H1 (cell line): ENCODE measurements at regions of chr11 and their contacts with region 1.

Region 1: GRCh38 chr11:15101072-15101709 is 13.5 kb upstream of the INSC start:
- DNase-seq: peak; percentile 21 to 83
- H3K4me3 ChIP-seq: no peak overlapping the region
- H3K27ac ChIP-seq: no peak overlapping the region
- H3K4me1 ChIP-seq: no peaks in the 10 kb centered on the region; a peak in 1 of 7 replicates
- H3K27me3 ChIP-seq: no peaks in the 10 kb centered on the region; a peak in 1 of 7 replicates
- CTCF ChIP-seq: peak; percentile 87 to 95 (median 94)
- EP300 ChIP-seq: no peak
- POLR2A ChIP-seq: no peak
- RAD21 ChIP-seq: peak; percentile 92 to 93

Region 2: DNA sequence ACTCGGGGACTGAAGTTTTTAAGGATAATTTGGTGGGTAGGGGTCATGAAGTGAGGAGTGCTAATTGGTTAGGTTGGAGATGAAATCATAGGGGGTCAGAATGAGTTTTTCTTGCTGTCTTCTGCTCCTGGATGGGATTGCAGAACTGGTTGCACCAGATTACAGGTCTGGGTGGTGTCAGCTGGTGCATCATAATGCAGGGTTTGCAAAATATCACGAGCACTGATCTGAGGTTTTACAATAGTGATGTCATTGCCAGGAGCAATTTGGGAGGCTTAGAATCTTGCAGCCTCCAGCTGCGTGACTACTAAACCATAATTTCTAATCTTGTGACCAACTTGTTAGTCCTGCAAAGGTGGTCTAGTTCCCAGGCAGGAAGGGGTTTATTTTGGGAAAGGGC is 74.2 kb before region 1 on chr11:
- CTCF ChIA-PET with region 1: no interaction called
- POLR2A ChIA-PET with region 1: no interaction called
- DNase-seq: no peak
- H3K4me3 ChIP-seq: no peak overlapping the region
- H3K27ac ChIP-seq: no peak overlapping the region
- H3K4me1 ChIP-seq: peaks cover 0 to 3% (median 0%) of the 10 kb centered on the region in 4 experiments; a peak in 2 of 7 replicates
- H3K27me3 ChIP-seq: no peaks in the 10 kb centered on the region
- CTCF ChIP-seq: no peak
- EP300 ChIP-seq: no peak
- POLR2A ChIP-seq: no peak
- RAD21 ChIP-seq: no peak

Region 3: DNA sequence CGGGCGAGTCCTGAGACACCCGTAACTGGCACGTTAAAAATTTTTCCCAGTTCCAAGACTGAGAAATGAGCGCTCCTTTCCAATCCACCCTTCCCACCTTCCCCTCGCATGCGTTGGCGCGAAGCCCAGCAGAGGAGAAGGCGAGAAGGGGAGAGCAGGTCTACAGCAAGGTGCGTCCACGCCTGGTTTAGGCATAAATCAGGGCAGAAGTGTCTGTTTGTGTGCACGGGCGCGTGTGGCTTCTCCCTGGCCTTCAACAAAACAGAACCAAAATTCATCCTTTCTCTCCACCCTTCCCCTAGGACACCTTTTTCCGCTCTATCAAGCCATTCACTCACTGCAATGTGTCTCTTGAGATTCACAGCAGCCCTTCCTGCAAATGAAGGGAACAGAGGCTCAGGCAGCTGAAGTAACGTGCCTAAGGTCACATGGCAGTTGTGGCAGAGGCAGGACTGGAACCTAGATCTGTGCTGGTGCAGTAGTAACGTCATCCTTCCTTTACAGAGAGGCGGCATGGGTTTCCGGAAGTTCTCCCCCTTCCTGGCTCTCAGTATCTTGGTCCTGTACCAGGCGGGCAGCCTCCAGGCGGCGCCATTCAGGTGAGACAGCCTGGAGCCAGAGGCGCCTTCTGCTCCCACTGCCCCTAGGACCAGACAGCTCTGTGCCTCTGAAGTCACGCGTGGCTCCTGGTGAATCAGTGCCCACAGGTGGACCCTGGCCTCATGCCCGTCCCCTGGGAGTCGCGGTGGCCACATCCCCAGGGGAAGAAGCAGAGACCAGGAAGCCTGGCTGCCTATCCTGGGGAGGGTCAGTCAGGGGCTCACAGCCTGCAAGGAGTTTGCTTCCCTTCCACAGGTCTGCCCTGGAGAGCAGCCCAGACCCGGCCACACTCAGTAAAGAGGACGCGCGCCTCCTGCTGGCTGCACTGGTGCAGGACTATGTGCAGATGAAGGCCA is 26.7 kb before region 1 on chr11:
- CTCF ChIA-PET with region 1: interaction called, 37 read pairs
- POLR2A ChIA-PET with region 1: interaction called, 3 read pairs
- DNase-seq: peak; percentile 73 to 98
- H3K4me3 ChIP-seq: peak overlapping the region; percentile 40 to 68 (median 56)
- H3K27ac ChIP-seq: no peak overlapping the region; the same call in 1 of the 2 replicates
- H3K4me1 ChIP-seq: peaks cover 0 to 4% (median under 1%) of the 10 kb centered on the region in 4 experiments; a peak in 2 of 7 replicates
- H3K27me3 ChIP-seq: peaks cover 4 to 24% (median 20%) of the 10 kb centered on the region in 4 experiments
- CTCF ChIP-seq: peak; percentile 78 to 93 (median 90)
- EP300 ChIP-seq: no peak
- POLR2A ChIP-seq: no peak
- RAD21 ChIP-seq: peak; percentile 81 to 86

Region 4: DNA sequence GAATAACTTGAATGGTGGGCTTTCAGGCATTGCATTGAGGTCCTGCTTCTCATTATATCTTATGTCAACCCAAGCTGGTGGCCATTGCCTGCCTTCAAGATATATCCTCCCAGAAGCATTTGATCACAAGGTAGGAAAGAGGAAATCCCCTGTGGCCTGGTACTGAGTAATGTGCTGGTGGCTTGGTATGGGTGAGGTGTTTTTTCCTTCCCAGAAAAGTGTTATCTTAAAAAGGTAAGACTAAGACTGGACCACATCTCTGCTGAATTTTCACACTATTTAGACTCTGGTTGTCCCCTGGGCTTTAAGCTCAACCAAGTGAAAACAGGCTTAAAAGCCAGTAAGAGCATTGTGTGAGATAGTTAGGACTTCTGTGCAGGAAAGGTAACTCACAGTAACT is 17.2 kb after region 1 on chr11:
- CTCF ChIA-PET with region 1: interaction called, 32 read pairs
- POLR2A ChIA-PET with region 1: no interaction called
- DNase-seq: no peak
- H3K4me3 ChIP-seq: no peak overlapping the region
- H3K27ac ChIP-seq: no peak overlapping the region
- H3K4me1 ChIP-seq: peaks cover 0 to 3% (median under 1%) of the 10 kb centered on the region in 4 experiments; a peak in 1 of 7 replicates
- H3K27me3 ChIP-seq: peaks cover 0 to 24% (median 17%) of the 10 kb centered on the region in 4 experiments; a peak in 5 of 7 replicates
- CTCF ChIP-seq: no peak
- EP300 ChIP-seq: no peak
- POLR2A ChIP-seq: no peak
- RAD21 ChIP-seq: no peak

Region 5: GRCh38 chr11:15146271-15147003 is 45.2 kb after region 1 on chr11:
- CTCF ChIA-PET with region 1: interaction called, 69 read pairs
- POLR2A ChIA-PET with region 1: no interaction called
- DNase-seq: no peak
- H3K4me3 ChIP-seq: no peak overlapping the region
- H3K27ac ChIP-seq: no peak overlapping the region
- H3K4me1 ChIP-seq: peaks cover 0 to 7% (median 3%) of the 10 kb centered on the region in 4 experiments; a peak in 3 of 7 replicates
- H3K27me3 ChIP-seq: no peaks in the 10 kb centered on the region
- CTCF ChIP-seq: no peak
- EP300 ChIP-seq: no peak
- POLR2A ChIP-seq: no peak
- RAD21 ChIP-seq: no peak

Region 6: GRCh38 chr11:15169815-15170551 is 68.8 kb after region 1 on chr11:
- CTCF ChIA-PET with region 1: interaction called, 11 read pairs
- POLR2A ChIA-PET with region 1: no interaction called
- DNase-seq: no peak
- H3K4me3 ChIP-seq: no peak overlapping the region
- H3K27ac ChIP-seq: no peak overlapping the region
- H3K4me1 ChIP-seq: no peaks in the 10 kb centered on the region
- H3K27me3 ChIP-seq: no peaks in the 10 kb centered on the region
- CTCF ChIP-seq: no peak
- EP300 ChIP-seq: no peak
- POLR2A ChIP-seq: no peak
- RAD21 ChIP-seq: no peak

Region 7: DNA sequence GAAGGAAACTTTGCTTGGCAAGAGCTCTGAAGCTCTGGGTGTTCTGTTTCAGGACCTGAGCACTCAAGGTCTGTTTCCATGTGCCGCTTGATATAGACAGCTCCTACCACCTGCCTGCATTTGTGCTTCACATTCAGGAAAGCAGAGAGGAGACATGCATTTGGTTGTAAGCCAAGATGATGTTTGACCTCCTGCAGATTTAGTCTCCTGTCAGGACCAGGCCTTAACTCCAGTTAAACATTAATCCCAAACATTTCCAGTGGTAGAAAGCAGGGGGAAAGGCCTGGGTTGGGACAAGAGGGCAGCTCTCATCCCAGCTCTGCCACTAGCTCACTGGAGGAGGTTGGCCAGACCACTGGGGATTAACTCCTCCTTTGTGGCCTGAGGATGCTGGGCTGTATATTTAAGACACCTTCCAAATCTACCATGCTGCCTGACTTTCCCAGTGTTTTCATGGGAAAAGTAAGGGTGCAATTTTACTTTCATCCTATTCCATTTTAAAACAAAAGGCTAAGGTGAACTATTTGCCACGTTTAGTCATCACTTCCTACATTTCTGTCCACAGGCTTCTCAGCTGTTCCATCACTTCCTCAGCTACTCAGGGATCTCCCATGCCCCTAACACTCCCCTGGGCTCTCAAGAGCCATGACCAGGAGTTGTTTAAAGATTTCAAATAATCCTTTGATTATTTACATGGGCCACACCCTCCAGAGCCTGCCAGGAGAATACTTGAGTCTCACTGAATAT is 94.4 kb after region 1 on chr11:
- CTCF ChIA-PET with region 1: interaction called, 177 read pairs
- POLR2A ChIA-PET with region 1: no interaction called
- DNase-seq: peak in 1 of 2 experiments; percentile 22
- H3K4me3 ChIP-seq: no peak overlapping the region
- H3K27ac ChIP-seq: no peak overlapping the region
- H3K4me1 ChIP-seq: no peaks in the 10 kb centered on the region
- H3K27me3 ChIP-seq: no peaks in the 10 kb centered on the region; a peak in 1 of 7 replicates
- CTCF ChIP-seq: no peak
- EP300 ChIP-seq: no peak
- POLR2A ChIP-seq: no peak
- RAD21 ChIP-seq: no peak

Region 8: GRCh38 chr11:15216678-15217077 is 115.5 kb after region 1 on chr11:
- CTCF ChIA-PET with region 1: interaction called, 177 read pairs
- POLR2A ChIA-PET with region 1: no interaction called
- DNase-seq: no peak
- H3K4me3 ChIP-seq: no peak overlapping the region
- H3K27ac ChIP-seq: no peak overlapping the region
- H3K4me1 ChIP-seq: no peaks in the 10 kb centered on the region; a peak in 1 of 7 replicates
- H3K27me3 ChIP-seq: no peaks in the 10 kb centered on the region
- CTCF ChIP-seq: peak; percentile 62 to 69 (median 69)
- EP300 ChIP-seq: no peak
- POLR2A ChIP-seq: no peak
- RAD21 ChIP-seq: peak; percentile 47 to 58